CD8-positive, alpha-beta T cell (primary cell): ENCODE measurements at regions of chr10 and their contacts with region 1.

Region 1: GRCh38 chr10:33155720-33156638 is 178.5 kb downstream of the NRP1 start:
- DNase-seq: peak in 4 of 9 experiments; percentile 37 to 81 (median 62)
- ATAC-seq: peak; percentile 92
- H3K4me3 ChIP-seq: no peak overlapping the region
- H3K4me3 Mint-ChIP-seq: no peak overlapping the region
- H3K27ac ChIP-seq: no peak overlapping the region
- H3K27ac Mint-ChIP-seq: no peak overlapping the region
- H3K4me1 ChIP-seq: peaks cover 21% of the 10 kb centered on the region
- H3K4me1 Mint-ChIP-seq: peaks cover 28% of the 10 kb centered on the region
- H3K27me3 ChIP-seq: no peaks in the 10 kb centered on the region
- H3K27me3 Mint-ChIP-seq: no peaks in the 10 kb centered on the region
- CTCF ChIP-seq: peak; percentile 63

Region 2: DNA sequence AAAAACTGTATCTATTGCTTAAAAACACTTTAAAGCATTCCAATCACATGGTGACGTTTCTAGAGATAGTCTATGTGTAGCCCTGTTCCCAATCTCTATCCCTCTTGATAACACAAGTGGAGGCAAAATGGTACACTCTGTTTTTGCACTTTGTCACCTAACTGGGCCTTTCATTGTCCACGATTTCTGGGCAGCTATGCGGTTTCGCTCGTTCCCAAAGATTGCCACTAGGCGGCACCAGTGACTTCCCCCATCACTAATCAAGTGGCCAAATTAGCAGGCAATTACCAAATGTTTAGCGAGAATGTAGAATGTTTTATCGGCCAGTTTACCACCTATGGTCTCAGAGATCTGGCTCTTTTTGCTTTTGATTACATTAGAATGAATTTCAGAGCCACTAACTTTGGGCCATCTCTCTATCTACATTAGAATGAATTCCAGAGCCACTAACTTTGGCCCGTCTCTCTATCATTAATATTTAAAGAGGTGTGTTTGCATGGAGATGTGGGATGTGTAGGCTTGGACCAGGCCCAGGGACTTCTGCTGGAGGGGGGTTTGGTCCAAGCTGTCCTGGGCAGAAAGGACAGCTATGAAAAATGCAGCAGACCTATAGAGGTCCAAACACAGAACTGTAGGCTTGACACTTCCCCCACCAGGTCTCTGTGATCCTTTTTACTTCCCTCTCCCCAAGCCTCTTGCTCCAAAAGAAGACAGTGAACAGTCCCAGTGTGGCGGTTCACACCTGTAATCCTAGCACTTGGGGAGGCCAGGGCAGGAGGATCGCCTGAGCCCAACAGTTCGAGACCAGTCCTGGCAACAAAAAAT is 899.2 kb before region 1 on chr10:
- CTCF ChIA-PET with region 1: no interaction called
- POLR2A ChIA-PET with region 1: no interaction called
- intact Hi-C with region 1: loop called in 1 of 2 experiments (anchors 10 kb)
- DNase-seq: peak; percentile 43 to 81 (median 67)
- ATAC-seq: peak; percentile 73
- H3K4me3 ChIP-seq: no peak overlapping the region
- H3K4me3 Mint-ChIP-seq: no peak overlapping the region
- H3K27ac ChIP-seq: no peak overlapping the region
- H3K27ac Mint-ChIP-seq: no peak overlapping the region
- H3K4me1 ChIP-seq: no peaks in the 10 kb centered on the region
- H3K4me1 Mint-ChIP-seq: peaks cover 5% of the 10 kb centered on the region
- H3K27me3 ChIP-seq: no peaks in the 10 kb centered on the region
- H3K27me3 Mint-ChIP-seq: no peaks in the 10 kb centered on the region
- CTCF ChIP-seq: peak; percentile 89

Region 3: GRCh38 chr10:33055625-33056024 is 100.4 kb before region 1 on chr10:
- CTCF ChIA-PET with region 1: no interaction called
- POLR2A ChIA-PET with region 1: no interaction called
- intact Hi-C with region 1: loop called in 1 of 2 experiments (anchors 2 kb)
- DNase-seq: no peak
- ATAC-seq: no peak
- H3K4me3 ChIP-seq: no peak overlapping the region
- H3K4me3 Mint-ChIP-seq: no peak overlapping the region
- H3K27ac ChIP-seq: no peak overlapping the region
- H3K27ac Mint-ChIP-seq: no peak overlapping the region
- H3K4me1 ChIP-seq: no peaks in the 10 kb centered on the region
- H3K4me1 Mint-ChIP-seq: peaks cover 4% of the 10 kb centered on the region
- H3K27me3 ChIP-seq: no peaks in the 10 kb centered on the region
- H3K27me3 Mint-ChIP-seq: no peaks in the 10 kb centered on the region
- CTCF ChIP-seq: no peak

Region 4: GRCh38 chr10:33115738-33116719 is 40.0 kb before region 1 on chr10:
- CTCF ChIA-PET with region 1: interaction called, 97 read pairs
- POLR2A ChIA-PET with region 1: interaction called, 10 read pairs
- intact Hi-C with region 1: loop called (anchors 1 kb)
- DNase-seq: peak in 6 of 9 experiments; percentile 26 to 72 (median 50)
- ATAC-seq: peak; percentile 10
- H3K4me3 ChIP-seq: no peak overlapping the region
- H3K4me3 Mint-ChIP-seq: peak overlapping the region; percentile 32
- H3K27ac ChIP-seq: peak overlapping the region in 1 of 2 experiments; percentile 76
- H3K27ac Mint-ChIP-seq: peak overlapping the region; percentile 76
- H3K4me1 ChIP-seq: peaks cover 40% of the 10 kb centered on the region
- H3K4me1 Mint-ChIP-seq: peaks cover 81% of the 10 kb centered on the region
- H3K27me3 ChIP-seq: no peaks in the 10 kb centered on the region
- H3K27me3 Mint-ChIP-seq: no peaks in the 10 kb centered on the region
- CTCF ChIP-seq: peak; percentile 42

Region 5: GRCh38 chr10:33134011-33134751 is 21.8 kb before region 1 on chr10:
- CTCF ChIA-PET with region 1: interaction called, 27 read pairs
- POLR2A ChIA-PET with region 1: interaction called, 11 read pairs
- intact Hi-C with region 1: loop called in 1 of 2 experiments (anchors 1 kb)
- DNase-seq: peak in 8 of 9 experiments; percentile 51 to 87 (median 72)
- ATAC-seq: peak; percentile 67
- H3K4me3 ChIP-seq: no peak overlapping the region
- H3K4me3 Mint-ChIP-seq: no peak overlapping the region
- H3K27ac ChIP-seq: peak overlapping the region; percentile 30 to 55
- H3K27ac Mint-ChIP-seq: peak overlapping the region; percentile 66
- H3K4me1 ChIP-seq: peaks cover 48% of the 10 kb centered on the region
- H3K4me1 Mint-ChIP-seq: peaks cover 70% of the 10 kb centered on the region
- H3K27me3 ChIP-seq: no peaks in the 10 kb centered on the region
- H3K27me3 Mint-ChIP-seq: no peaks in the 10 kb centered on the region
- CTCF ChIP-seq: no peak

Region 6: GRCh38 chr10:33193057-33193700 is 37.2 kb after region 1 on chr10:
- CTCF ChIA-PET with region 1: no interaction called
- POLR2A ChIA-PET with region 1: no interaction called
- intact Hi-C with region 1: no loop called
- DNase-seq: peak; percentile 25 to 84 (median 69)
- ATAC-seq: peak; percentile 58
- H3K4me3 ChIP-seq: no peak overlapping the region
- H3K4me3 Mint-ChIP-seq: no peak overlapping the region
- H3K27ac ChIP-seq: no peak overlapping the region
- H3K27ac Mint-ChIP-seq: no peak overlapping the region
- H3K4me1 ChIP-seq: no peaks in the 10 kb centered on the region
- H3K4me1 Mint-ChIP-seq: no peaks in the 10 kb centered on the region
- H3K27me3 ChIP-seq: no peaks in the 10 kb centered on the region
- H3K27me3 Mint-ChIP-seq: peaks cover 4% of the 10 kb centered on the region
- CTCF ChIP-seq: peak; percentile 59

Region 7: GRCh38 chr10:33248638-33249037 is 92.7 kb after region 1 on chr10:
- CTCF ChIA-PET with region 1: no interaction called
- POLR2A ChIA-PET with region 1: no interaction called
- intact Hi-C with region 1: loop called in 1 of 2 experiments (anchors 10 kb)
- DNase-seq: peak in 3 of 9 experiments; percentile 21 to 85 (median 70)
- ATAC-seq: peak; percentile 95
- H3K4me3 ChIP-seq: peak overlapping the region in 1 of 2 experiments; percentile 26
- H3K4me3 Mint-ChIP-seq: peak overlapping the region; percentile 37
- H3K27ac ChIP-seq: no peak overlapping the region
- H3K27ac Mint-ChIP-seq: peak overlapping the region; percentile 65
- H3K4me1 ChIP-seq: peaks cover 28% of the 10 kb centered on the region
- H3K4me1 Mint-ChIP-seq: peaks cover 38% of the 10 kb centered on the region
- H3K27me3 ChIP-seq: no peaks in the 10 kb centered on the region
- H3K27me3 Mint-ChIP-seq: no peaks in the 10 kb centered on the region
- CTCF ChIP-seq: no peak